Ascending aorta (tissue), 2 donors: ENCODE measurements at regions of chr14 and their contacts with region 1.

Region 1: GRCh38 chr14:95561001-95561412 is 26.2 kb downstream of the GLRX5 start:
- DNase-seq: peak in 1 of 2 donors; percentile 89
- H3K4me3 ChIP-seq: no peak overlapping the region
- H3K27ac ChIP-seq: no peak overlapping the region
- H3K4me1 ChIP-seq: no peaks in the 10 kb centered on the region
- H3K27me3 ChIP-seq: no peaks in the 10 kb centered on the region
- CTCF ChIP-seq: peak; percentile 80 to 88 (median 88)

Region 2: DNA sequence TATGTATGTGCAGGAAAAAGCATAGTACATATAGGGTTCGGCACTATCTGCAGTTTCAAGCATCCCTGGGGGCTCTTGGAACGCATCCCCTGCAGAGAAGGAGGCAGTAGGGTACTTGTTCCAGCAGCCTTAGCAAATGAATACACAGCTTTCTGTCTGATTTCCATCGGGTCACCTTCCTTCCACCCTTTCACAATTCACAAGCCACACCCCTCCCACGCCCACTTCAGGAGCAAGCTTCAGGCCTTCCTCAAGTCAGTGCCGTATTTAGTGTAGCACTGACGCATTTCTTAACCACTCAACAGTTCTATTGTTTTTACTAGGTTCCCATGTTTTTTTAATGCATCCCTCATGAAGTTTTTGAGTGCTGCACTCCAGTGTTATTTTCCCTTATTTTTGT is 305.5 kb before region 1 on chr14:
- intact Hi-C with region 1: no loop called
- DNase-seq: no peak
- H3K4me3 ChIP-seq: no peak overlapping the region
- H3K27ac ChIP-seq: no peak overlapping the region
- H3K4me1 ChIP-seq: no peaks in the 10 kb centered on the region
- H3K27me3 ChIP-seq: no peaks in the 10 kb centered on the region
- CTCF ChIP-seq: no peak

Region 3: DNA sequence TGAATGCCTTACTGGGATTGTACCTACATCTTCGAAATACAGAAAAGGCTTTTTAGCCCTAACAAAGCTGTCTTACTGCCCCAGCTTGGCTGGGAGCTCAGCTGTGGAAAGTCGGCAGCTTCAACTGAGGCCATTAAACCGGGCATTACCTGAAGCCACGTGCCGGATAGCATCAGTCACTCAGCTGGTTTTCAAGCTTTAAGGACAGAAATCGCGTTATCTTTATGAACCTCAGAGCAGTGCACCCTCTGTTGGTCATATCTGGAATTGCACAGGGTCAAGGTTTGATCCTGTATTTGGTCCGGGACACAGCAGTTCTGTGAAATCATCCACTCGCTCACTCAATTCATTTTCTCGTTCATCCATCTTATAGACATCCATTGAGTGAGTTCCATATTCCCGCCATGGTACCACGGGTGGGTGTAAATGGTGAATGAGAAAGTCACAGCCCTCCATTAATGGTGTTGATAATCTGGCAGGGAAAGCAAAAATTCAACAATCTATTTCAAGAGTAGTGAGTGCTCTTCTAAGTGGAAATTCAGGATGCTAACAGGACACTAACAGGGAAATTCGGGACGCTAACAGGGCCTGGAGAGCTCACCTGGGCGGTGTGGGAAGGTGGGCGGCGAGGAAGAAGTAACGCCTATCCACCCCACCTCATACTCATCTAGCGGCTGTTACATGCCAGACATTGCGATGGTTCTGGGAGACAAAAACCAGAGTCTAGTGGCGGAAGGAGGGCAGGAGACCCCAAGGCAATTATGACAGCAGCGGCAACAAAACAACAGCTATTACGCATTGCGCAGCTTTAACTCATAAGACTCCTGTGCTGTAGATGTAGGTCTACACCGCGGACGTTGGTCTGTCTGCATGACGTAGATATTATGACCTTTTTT is 213.5 kb after region 1 on chr14:
- intact Hi-C with region 1: loop called (anchors 2 kb)
- DNase-seq: no peak
- H3K4me3 ChIP-seq: no peak overlapping the region
- H3K27ac ChIP-seq: no peak overlapping the region
- H3K4me1 ChIP-seq: no peaks in the 10 kb centered on the region
- H3K27me3 ChIP-seq: no peaks in the 10 kb centered on the region
- CTCF ChIP-seq: peak; percentile 56 to 68 (median 64)

Region 4: GRCh38 chr14:95993768-95994592 is 433.0 kb after region 1 on chr14:
- intact Hi-C with region 1: loop called (anchors 1 kb)
- DNase-seq: no peak
- H3K4me3 ChIP-seq: no peak overlapping the region
- H3K27ac ChIP-seq: no peak overlapping the region
- H3K4me1 ChIP-seq: no peaks in the 10 kb centered on the region
- H3K27me3 ChIP-seq: no peaks in the 10 kb centered on the region
- CTCF ChIP-seq: peak; percentile 54 to 82 (median 61)

Region 5: DNA sequence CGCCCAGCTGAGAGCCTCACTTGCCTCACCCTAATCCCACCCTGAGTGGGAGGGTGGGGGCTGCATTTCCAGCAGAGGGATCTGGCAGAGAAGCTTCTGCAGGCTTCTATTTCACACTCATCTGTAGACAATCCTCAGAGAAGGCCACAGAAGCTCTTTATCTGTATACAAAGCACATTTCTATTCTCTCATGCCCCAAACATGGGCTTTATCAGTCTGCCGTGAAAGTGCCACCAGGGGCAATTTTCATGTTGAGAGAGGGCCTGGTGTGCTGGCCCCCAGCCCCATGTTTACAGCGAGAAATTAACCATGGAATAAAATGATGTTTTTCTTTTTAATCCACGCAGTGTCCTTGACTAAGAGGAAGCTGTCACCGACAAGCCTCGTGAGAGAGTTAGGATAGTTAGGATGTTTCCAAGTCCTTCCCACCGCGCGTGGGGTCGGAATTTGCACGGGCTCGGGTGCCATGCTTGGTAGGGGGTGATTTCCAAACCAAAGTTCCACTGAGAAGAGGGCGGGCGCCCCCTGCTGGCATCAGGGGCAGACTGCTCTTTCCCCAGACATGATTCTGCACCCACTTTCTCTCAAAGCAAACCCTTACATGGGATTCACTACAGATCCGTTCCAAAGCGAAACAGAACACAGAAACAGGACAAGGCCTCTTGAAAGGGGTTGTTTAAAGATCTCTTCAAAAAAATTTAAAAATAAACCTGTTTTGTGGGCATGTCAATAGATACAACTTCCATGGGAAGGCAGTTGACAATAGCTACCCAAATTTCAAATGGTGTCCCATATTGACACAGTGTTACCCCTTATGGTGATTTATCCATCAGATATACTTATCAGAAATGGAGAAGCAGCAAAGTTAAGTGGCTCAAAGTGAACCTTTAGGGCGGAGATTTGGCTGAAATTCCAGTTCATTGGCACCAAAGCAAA is 714.4 kb after region 1 on chr14:
- intact Hi-C with region 1: loop called (anchors 5 kb)
- DNase-seq: peak in 1 of 2 donors; percentile 73
- H3K4me3 ChIP-seq: no peak overlapping the region
- H3K27ac ChIP-seq: no peak overlapping the region
- H3K4me1 ChIP-seq: no peaks in the 10 kb centered on the region
- H3K27me3 ChIP-seq: no peaks in the 10 kb centered on the region
- CTCF ChIP-seq: peak; percentile 62 to 90 (median 71)